GM10248 (cell line): ENCODE measurements at regions of chr15 and their contacts with region 1.

Region 1: GRCh38 chr15:77430213-77430612 is 9.5 kb downstream of the HMG20A start:
- DNase-seq: peak; percentile 15
- CTCF ChIP-seq: no peak

Region 2: GRCh38 chr15:77419836-77420609 is 10.2 kb before region 1 on chr15 and contains the start of gene PEAK1:
- CTCF ChIA-PET with region 1: interaction called, 12 read pairs
- POLR2A ChIA-PET with region 1: no interaction called
- DNase-seq: peak; percentile 97
- CTCF ChIP-seq: no peak